Activated CD4-positive, alpha-beta T cell treated with anti-CD3 and anti-CD28 coated beads for 36 hours (primary cell): ENCODE measurements at regions of chr2 and their contacts with region 1.

Region 1: GRCh38 chr2:203484266-203485112 is 50.6 kb downstream of the RAPH1 start:
- DNase-seq: peak; percentile 66
- ATAC-seq: peak; percentile 91
- H3K4me3 Mint-ChIP-seq: no peak overlapping the region
- H3K27ac Mint-ChIP-seq: peak overlapping the region; percentile 62
- H3K4me1 Mint-ChIP-seq: peaks cover 11% of the 10 kb centered on the region
- H3K27me3 Mint-ChIP-seq: no peaks in the 10 kb centered on the region

Region 2: GRCh38 chr2:202848813-202849212 is 635.7 kb before region 1 on chr2:
- CTCF ChIA-PET with region 1: no interaction called
- POLR2A ChIA-PET with region 1: no interaction called
- intact Hi-C with region 1: no loop called
- DNase-seq: no peak
- ATAC-seq: no peak
- H3K4me3 Mint-ChIP-seq: no peak overlapping the region
- H3K27ac Mint-ChIP-seq: no peak overlapping the region
- H3K4me1 Mint-ChIP-seq: no peaks in the 10 kb centered on the region
- H3K27me3 Mint-ChIP-seq: no peaks in the 10 kb centered on the region

Region 3: DNA sequence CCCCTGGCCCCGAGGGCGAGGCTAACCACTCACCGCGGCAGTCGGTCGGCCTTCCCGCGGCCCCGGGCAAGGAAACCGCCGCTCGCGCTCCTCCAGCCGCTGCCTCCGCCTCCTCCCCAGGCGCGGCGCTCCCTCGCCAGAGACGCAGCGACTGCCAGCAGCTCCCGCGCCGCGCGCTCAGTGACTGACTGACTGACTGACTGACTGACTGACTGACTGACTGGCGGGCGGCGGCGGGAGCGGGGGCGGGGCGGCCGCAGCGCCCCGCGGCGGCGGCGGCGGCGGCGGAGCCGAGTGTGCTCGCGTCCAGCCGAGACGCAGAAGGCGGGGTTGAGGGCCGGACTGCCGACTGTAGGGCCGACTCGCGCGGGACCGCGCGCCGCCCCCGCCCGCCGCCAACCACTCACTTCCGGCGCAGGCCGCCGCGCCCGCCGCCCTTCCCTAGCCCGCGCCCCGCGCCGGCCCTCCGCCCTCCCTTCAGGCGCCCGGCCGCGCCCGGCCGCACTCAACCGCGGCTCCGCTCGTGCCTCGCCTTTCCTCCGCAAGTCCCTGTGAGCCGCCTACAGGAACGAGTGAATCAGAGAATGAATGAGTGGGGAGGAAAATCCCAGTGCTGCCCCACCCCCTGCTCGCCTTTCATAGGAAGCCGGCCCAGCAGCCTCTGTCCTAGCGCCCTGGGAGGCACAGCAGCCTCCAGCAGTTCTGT is 50.7 kb after region 1 on chr2 and contains the start of gene RAPH1:
- CTCF ChIA-PET with region 1: interaction called, 7 read pairs
- POLR2A ChIA-PET with region 1: no interaction called
- intact Hi-C with region 1: loop called (anchors 2 kb)
- DNase-seq: peak; percentile 85
- ATAC-seq: peak; percentile 77
- H3K4me3 Mint-ChIP-seq: peak within 1 kb of the TSS; percentile 74
- H3K27ac Mint-ChIP-seq: peak within 1 kb of the TSS; percentile 56
- H3K4me1 Mint-ChIP-seq: peaks cover 30% of the 10 kb centered on the region
- H3K27me3 Mint-ChIP-seq: peaks cover 9% of the 10 kb centered on the region
- total RNA-seq, gene RAPH1: 8.5 to 9.9 TPM

Region 4: DNA sequence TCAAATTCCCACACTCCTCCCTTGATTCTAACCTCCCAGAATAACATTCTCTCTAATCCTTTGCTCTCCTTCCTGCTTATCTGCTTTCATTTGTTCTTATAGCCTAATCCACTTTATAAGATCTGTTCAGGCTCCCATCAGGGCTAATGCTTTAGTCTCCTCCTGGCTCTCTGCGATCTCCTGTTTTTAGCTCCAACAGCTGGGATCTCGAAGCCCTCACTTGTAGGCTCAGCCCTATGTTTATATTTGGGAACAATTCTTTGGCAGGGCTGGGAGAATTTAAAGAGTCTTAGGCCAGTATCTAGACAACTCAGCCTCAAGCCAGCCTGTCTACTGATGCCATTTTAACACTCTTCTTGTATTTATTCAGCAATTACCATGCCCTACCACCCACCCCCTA is 77.8 kb after region 1 on chr2:
- CTCF ChIA-PET with region 1: no interaction called
- POLR2A ChIA-PET with region 1: no interaction called
- intact Hi-C with region 1: no loop called
- DNase-seq: no peak
- ATAC-seq: no peak
- H3K4me3 Mint-ChIP-seq: no peak overlapping the region
- H3K27ac Mint-ChIP-seq: no peak overlapping the region
- H3K4me1 Mint-ChIP-seq: no peaks in the 10 kb centered on the region
- H3K27me3 Mint-ChIP-seq: no peaks in the 10 kb centered on the region

Region 5: DNA sequence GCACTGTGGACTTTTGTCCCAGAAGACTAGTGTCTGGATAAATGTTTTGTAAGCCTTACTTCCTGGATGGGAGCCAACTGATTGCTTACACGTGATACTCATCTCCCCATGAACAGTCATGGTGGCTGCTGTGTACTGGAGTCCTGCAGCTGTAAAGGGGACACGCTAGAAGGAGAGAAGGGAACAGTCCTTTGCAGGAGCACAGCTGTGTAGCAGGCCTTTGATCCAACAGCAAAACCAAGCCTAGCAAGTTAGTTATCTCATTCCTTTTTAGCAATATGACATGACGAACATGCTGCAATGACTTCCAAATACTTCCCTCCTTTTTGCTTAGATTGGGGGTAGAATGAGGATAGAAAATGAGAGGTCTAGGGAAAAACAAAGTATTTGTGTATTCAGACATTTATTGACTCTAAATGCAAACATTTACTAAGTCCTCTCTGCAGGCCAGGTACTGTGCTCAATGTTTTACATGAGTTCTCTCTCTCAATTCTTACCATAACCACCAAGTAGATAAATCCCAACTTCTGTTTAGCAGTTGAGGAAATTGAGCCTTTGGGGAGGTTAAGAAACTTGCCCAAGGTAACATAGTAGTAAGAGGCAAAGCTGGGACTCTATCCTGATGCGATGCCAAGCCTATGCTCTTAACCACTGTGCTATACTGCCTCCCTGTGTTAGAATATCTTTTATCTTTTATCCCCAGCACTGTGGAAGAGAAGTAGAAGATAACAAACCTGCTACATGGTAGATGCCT is 166.5 kb after region 1 on chr2:
- CTCF ChIA-PET with region 1: interaction called, 4 read pairs
- POLR2A ChIA-PET with region 1: no interaction called
- intact Hi-C with region 1: loop called (anchors 1 kb)
- DNase-seq: peak; percentile 20
- ATAC-seq: peak; percentile 90
- H3K4me3 Mint-ChIP-seq: no peak overlapping the region
- H3K27ac Mint-ChIP-seq: no peak overlapping the region
- H3K4me1 Mint-ChIP-seq: peaks cover 20% of the 10 kb centered on the region
- H3K27me3 Mint-ChIP-seq: no peaks in the 10 kb centered on the region

Region 6: DNA sequence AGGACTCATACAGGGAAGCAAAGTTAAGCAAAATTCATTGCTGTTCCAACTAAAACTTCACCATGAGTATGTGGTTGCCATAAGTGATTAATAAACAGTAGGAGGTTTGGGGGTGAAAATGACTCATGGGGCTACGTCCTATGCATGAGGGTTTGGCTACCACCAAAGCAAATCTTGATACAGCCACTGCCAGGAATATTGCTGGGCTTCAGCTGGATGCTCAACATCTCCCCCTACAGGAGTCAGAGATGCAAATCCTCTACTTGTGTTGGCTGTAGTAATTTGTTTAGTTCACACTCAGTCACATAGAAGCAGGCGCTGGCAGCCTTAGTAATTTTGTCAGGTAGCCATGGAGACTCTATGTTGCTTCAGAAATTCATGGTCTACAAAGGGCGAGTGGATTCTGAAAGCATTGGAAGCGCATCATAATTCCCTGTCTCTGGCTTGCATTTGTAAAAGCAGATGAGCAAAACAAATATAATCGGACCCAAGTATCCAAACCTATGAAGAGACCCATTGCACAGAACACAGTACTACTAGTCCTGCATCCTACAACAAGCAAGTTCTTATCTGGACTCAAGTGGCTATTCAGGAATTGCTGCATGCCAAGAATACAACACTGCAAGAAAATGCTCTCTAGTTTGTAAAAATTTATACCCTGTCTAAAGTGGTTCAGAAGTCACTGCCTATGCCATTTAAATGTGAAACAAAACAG is 297.9 kb after region 1 on chr2:
- CTCF ChIA-PET with region 1: interaction called, 3 read pairs
- POLR2A ChIA-PET with region 1: no interaction called
- intact Hi-C with region 1: loop called (anchors 1 kb)
- DNase-seq: peak; percentile 81
- ATAC-seq: peak; percentile 94
- H3K4me3 Mint-ChIP-seq: no peak overlapping the region
- H3K27ac Mint-ChIP-seq: peak overlapping the region; percentile 89
- H3K4me1 Mint-ChIP-seq: peaks cover 52% of the 10 kb centered on the region
- H3K27me3 Mint-ChIP-seq: no peaks in the 10 kb centered on the region

Region 7: DNA sequence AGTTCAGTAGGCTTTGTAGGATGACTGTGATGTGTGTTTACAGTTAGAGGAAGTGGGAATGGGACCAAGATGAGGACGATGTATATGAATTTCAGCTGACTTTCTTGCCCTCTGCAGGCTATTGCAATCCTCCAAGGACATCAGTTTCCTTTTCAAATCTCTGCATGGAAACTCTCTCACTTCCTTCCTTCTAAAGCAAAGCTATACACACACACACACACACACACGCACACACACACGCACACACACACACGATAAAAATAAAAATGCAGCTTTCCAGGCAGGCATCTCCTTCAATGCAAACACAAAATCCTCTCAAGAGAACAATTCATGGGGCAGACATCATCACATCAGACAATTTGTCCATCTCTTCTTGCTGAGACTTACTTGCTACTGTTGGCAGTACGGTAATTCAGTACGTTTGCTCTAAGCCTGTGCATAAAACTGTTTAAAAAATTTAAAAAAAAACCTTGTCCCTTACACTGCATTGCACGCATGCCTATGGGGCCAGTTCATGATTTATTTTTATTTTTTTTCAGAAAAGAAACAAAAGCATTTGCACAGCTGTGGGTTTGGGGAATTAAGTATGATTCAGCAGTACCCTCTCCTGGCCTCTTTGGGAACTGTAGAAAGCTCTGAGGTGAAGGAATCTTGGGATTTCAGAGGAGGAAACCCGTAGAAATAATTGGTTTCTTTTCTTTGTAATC is 424.9 kb after region 1 on chr2:
- CTCF ChIA-PET with region 1: interaction called, 4 read pairs
- POLR2A ChIA-PET with region 1: no interaction called
- intact Hi-C with region 1: loop called (anchors 1 kb)
- DNase-seq: peak; percentile 44
- ATAC-seq: peak; percentile 72
- H3K4me3 Mint-ChIP-seq: peak overlapping the region; percentile 0
- H3K27ac Mint-ChIP-seq: peak overlapping the region; percentile 44
- H3K4me1 Mint-ChIP-seq: peaks cover 30% of the 10 kb centered on the region
- H3K27me3 Mint-ChIP-seq: peaks cover 2% of the 10 kb centered on the region